ENCODE measurements at regions of chr2 and their contacts with region 1.

Region 1: GRCh38 chr2:238462782-238463396 is 36.2 kb downstream of the ASB1 start:
- DNase-seq: no peak
- ATAC-seq: no peak

Region 2: GRCh38 chr2:237858294-237859081 is 604.4 kb before region 1 on chr2:
- intact Hi-C with region 1: no loop called
- DNase-seq: peak; percentile 69
- ATAC-seq: peak; percentile 78

Region 3: GRCh38 chr2:238158527-238159070 is 304.3 kb before region 1 on chr2 and contains the start of gene ERFE:
- intact Hi-C with region 1: no loop called
- DNase-seq: peak; percentile 59
- ATAC-seq: peak; percentile 49
- total RNA-seq, gene ERFE: not detected

Region 4: GRCh38 chr2:238370823-238371372 is 92.0 kb before region 1 on chr2:
- intact Hi-C with region 1: loop called (anchors 5 kb)
- DNase-seq: peak; percentile 70
- ATAC-seq: peak; percentile 97

Region 5: DNA sequence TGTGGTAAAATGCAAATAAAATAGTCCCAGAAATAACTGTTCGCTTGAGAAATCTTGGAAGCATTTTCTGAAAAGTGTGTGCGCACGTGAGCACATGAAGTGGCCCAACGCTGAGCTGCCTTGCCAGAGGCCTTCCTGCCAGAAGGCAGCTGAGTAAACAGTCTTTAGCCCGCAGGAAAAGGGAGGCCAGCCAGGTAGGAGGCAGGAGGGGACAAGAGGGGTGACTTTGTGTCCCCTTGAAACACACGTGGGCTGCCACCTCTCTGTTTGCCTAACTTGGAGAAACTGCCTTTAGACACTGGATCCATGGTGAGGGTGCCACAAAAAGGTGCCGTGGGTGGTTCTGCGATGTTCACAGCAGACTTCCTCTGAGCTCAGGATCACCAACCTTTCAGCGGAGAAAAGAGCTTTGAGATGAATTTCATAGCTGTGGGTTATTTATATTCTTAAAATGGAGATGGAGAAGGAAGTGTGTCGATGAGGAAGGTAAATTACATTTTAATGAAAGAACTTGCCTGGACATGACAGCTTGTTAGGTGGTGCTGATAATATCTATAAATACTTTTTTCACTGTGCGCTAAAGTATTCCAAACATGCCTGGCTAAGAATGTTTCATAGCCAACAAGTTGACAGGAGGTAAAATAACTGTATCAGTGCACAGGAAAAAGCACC is 72.8 kb before region 1 on chr2:
- intact Hi-C with region 1: no loop called
- DNase-seq: peak; percentile 56
- ATAC-seq: peak; percentile 91

Measured in left ventricle myocardium superior (tissue), 1 donor.